ENCODE measurements at regions of chr11 and their contacts with region 1.

Region 1: DNA sequence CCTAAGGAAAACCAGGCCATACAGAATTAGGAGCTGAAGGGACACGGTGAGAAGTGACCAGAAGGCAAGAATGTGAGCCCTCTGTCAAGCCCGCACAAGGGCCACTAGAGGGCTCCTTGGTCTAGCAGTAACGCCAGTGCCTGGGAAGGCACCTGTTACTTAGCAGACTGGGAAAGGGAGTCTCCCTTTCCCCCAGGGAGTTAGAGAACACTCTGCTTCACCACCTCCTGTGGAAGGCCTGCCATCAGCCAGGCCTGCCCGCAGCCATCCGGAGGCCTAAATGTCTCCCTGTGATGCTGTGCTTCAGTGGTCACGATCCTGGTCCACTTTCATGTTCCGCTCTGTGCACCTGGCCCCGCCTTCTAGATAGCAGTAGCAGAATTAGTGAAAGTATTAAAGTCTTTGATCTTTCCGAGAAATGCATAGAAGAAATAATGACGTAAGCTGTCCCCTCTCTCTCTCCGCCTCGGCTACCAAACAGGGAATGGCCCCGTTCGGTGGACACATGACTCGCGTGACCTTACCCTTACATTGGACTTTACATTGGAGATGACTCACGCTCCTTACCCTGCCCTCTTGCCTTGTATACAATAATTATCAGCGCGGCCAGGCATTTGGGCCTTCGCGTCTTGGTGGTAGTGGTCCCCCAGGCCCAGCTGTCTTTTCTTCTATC is 10.7 kb upstream of the GSTP1 start:
- DNase-seq: peak; percentile 69
- ATAC-seq: no peak
- H3K4me3 ChIP-seq: no peak overlapping the region
- H3K4me3 Mint-ChIP-seq: no peak overlapping the region
- H3K27ac ChIP-seq: no peak overlapping the region
- H3K27ac Mint-ChIP-seq: no peak overlapping the region
- H3K4me1 ChIP-seq: no peaks in the 10 kb centered on the region
- H3K4me1 Mint-ChIP-seq: peaks cover 3% of the 10 kb centered on the region
- H3K27me3 ChIP-seq: peaks cover 0 to 33% (median 9%) of the 10 kb centered on the region in 4 experiments
- H3K27me3 Mint-ChIP-seq: peaks cover 28% of the 10 kb centered on the region
- CTCF ChIP-seq: peak; percentile 80

Region 2: GRCh38 chr11:67583247-67584204 is 10.6 kb after region 1 on chr11 and contains the start of gene GSTP1:
- CTCF ChIA-PET with region 1: interaction called, 19 read pairs
- POLR2A ChIA-PET with region 1: interaction called, 3 read pairs
- intact Hi-C with region 1: loop called (anchors 1 kb)
- DNase-seq: peak; percentile 86
- ATAC-seq: peak; percentile 71
- H3K4me3 ChIP-seq: peak within 1 kb of the TSS; percentile 34 to 69 (median 58)
- H3K4me3 Mint-ChIP-seq: peak within 1 kb of the TSS; percentile 93
- H3K27ac ChIP-seq: peak within 1 kb of the TSS; percentile 51 to 91
- H3K27ac Mint-ChIP-seq: peak within 1 kb of the TSS; percentile 100
- H3K4me1 ChIP-seq: peaks cover 67 to 73% of the 10 kb centered on the region in 2 donors
- H3K4me1 Mint-ChIP-seq: peaks cover 68% of the 10 kb centered on the region
- H3K27me3 ChIP-seq: peaks cover 0 to 4% (median 2%) of the 10 kb centered on the region in 4 experiments
- H3K27me3 Mint-ChIP-seq: peaks cover 5% of the 10 kb centered on the region
- CTCF ChIP-seq: peak; percentile 71
- total RNA-seq, gene GSTP1: 296 and 313 TPM in 2 replicates

Region 3: DNA sequence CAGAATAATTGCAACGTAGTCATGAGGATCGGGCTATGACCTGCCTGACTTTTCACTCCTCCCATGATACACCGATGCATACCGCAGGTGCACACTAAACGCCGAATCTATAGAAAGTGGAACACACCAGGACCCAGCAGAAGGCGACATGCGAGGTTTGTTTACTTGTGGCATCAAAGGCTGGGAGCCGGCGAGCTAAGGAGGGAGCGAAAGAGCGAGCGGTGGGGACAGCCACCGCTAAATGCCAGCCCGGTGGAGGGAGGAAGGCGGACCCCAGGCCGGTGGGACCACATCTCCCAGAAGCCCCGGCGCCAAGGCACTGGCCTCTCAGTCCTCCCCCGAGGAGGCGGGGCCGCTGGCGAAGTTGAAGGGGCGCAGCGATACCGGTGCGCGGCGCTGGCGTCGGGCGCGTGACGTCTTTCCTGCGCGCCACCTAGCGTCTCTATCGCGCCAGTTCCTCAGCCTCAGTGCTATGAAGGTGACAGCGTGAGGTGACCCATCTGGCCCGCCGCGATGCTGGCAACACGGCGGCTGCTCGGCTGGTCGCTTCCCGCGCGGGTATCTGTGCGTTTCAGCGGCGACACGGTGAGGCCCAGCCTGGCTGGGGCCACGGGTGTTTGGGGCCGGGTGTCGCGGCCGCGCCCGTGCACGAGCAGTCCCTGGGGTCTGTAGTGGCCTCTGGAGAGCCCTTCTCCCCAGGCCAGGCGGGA is 33.8 kb after region 1 on chr11 and contains the start of gene NDUFV1:
- CTCF ChIA-PET with region 1: interaction called, 11 read pairs
- POLR2A ChIA-PET with region 1: no interaction called
- intact Hi-C with region 1: loop called (anchors 1 kb)
- DNase-seq: peak; percentile 97
- ATAC-seq: peak; percentile 99
- H3K4me3 ChIP-seq: peak within 1 kb of the TSS; percentile 70 to 90 (median 88)
- H3K4me3 Mint-ChIP-seq: peak within 1 kb of the TSS; percentile 95
- H3K27ac ChIP-seq: peak within 1 kb of the TSS; percentile 43 to 72
- H3K27ac Mint-ChIP-seq: peak within 1 kb of the TSS; percentile 90
- H3K4me1 ChIP-seq: peaks cover 13 to 17% of the 10 kb centered on the region in 2 donors
- H3K4me1 Mint-ChIP-seq: peaks cover 20% of the 10 kb centered on the region
- H3K27me3 ChIP-seq: peaks cover 0 to 16% (median 5%) of the 10 kb centered on the region in 4 experiments
- H3K27me3 Mint-ChIP-seq: peaks cover 18% of the 10 kb centered on the region
- CTCF ChIP-seq: peak; percentile 82
- total RNA-seq, gene NDUFV1: 232 and 238 TPM in 2 replicates

Region 4: DNA sequence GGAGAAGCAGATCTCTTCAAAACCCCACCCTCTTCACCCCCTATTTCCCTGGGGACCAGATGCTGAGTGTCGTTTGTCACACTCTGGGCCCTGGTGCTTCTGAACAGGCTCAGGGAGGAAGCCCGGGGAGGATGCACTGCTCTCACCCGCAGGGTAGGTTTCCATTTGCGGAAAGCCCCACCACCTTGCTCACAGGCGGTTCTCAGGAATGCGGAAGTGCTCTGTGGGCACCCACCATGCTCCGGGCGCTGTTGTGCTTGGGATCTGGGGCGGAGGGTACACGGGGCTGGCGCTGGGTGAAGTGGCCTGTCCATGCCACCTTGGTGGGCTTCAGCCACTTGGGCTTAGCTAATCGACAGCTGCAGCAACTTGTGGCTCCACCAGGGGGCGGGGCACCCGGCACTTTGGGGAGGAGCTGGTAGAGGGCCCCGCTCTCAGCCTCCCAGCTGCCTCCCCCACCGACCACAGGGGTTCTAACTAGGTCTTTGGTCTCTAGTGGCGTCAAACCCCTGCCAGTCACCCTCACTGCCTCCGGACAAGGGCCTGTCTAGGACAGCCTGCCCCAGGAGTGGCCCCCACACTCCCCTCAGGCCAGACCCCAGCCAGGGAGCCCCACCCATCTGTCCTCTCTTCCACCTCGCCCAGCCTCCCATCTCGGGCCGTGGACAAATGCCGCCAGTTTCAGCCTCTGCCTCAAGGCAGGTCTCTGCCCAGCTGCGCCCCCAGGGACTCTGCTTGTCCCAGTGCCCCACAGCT is 41.3 kb after region 1 on chr11:
- CTCF ChIA-PET with region 1: interaction called, 17 read pairs
- POLR2A ChIA-PET with region 1: interaction called, 3 read pairs
- intact Hi-C with region 1: no loop called
- DNase-seq: peak; percentile 97
- ATAC-seq: peak; percentile 95
- H3K4me3 ChIP-seq: peak overlapping the region in 4 of 5 experiments; percentile 38 to 58 (median 50)
- H3K4me3 Mint-ChIP-seq: peak overlapping the region; percentile 83
- H3K27ac ChIP-seq: peak overlapping the region; percentile 97 to 98
- H3K27ac Mint-ChIP-seq: peak overlapping the region; percentile 99
- H3K4me1 ChIP-seq: peaks cover 32 to 38% of the 10 kb centered on the region in 2 donors
- H3K4me1 Mint-ChIP-seq: peaks cover 45% of the 10 kb centered on the region
- H3K27me3 ChIP-seq: no peaks in the 10 kb centered on the region
- H3K27me3 Mint-ChIP-seq: no peaks in the 10 kb centered on the region
- CTCF ChIP-seq: peak; percentile 40

Region 5: GRCh38 chr11:67648140-67649123 is 75.5 kb after region 1 on chr11:
- CTCF ChIA-PET with region 1: interaction called, 12 read pairs
- POLR2A ChIA-PET with region 1: interaction called, 3 read pairs
- intact Hi-C with region 1: no loop called
- DNase-seq: peak; percentile 85
- ATAC-seq: peak; percentile 79
- H3K4me3 ChIP-seq: peak overlapping the region in 2 of 5 experiments; percentile 4 to 11
- H3K4me3 Mint-ChIP-seq: peak overlapping the region; percentile 95
- H3K27ac ChIP-seq: peak overlapping the region; percentile 56 to 66
- H3K27ac Mint-ChIP-seq: peak overlapping the region; percentile 78
- H3K4me1 ChIP-seq: peaks cover 66 to 72% of the 10 kb centered on the region in 2 donors
- H3K4me1 Mint-ChIP-seq: peaks cover 66% of the 10 kb centered on the region
- H3K27me3 ChIP-seq: peaks cover 0 to 5% (median 0%) of the 10 kb centered on the region in 4 experiments
- H3K27me3 Mint-ChIP-seq: no peaks in the 10 kb centered on the region
- CTCF ChIP-seq: peak; percentile 72

Region 6: GRCh38 chr11:67656278-67656922 is 83.5 kb after region 1 on chr11:
- CTCF ChIA-PET with region 1: interaction called, 12 read pairs
- POLR2A ChIA-PET with region 1: no interaction called
- intact Hi-C with region 1: loop called (anchors 1 kb)
- DNase-seq: peak; percentile 37
- ATAC-seq: no peak
- H3K4me3 ChIP-seq: no peak overlapping the region
- H3K4me3 Mint-ChIP-seq: no peak overlapping the region
- H3K27ac ChIP-seq: no peak overlapping the region
- H3K27ac Mint-ChIP-seq: no peak overlapping the region
- H3K4me1 ChIP-seq: peaks cover 8 to 11% of the 10 kb centered on the region in 2 donors
- H3K4me1 Mint-ChIP-seq: peaks cover 11% of the 10 kb centered on the region
- H3K27me3 ChIP-seq: no peaks in the 10 kb centered on the region
- H3K27me3 Mint-ChIP-seq: no peaks in the 10 kb centered on the region
- CTCF ChIP-seq: no peak

Region 7: DNA sequence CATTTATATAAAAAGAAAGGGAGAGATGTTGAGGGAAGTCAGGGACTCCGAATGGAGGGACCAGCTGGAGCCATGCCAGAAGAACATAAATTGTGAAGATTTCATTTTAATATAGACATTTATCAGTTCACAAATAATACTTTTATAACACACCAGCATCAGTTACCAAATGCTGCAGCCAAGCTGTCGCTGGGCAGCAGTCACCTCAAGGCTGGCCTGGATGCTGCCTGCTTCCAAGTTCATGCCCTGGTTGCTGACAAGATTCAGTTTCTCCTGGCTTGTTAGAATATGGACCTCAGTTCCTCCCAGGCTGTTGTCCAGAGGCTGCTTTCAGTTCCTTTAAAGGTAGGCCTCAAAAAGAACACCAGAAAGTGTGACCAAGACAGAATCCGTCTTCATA is 132.4 kb after region 1 on chr11:
- CTCF ChIA-PET with region 1: no interaction called
- POLR2A ChIA-PET with region 1: no interaction called
- intact Hi-C with region 1: loop called (anchors 5 kb)
- DNase-seq: no peak
- ATAC-seq: no peak
- H3K4me3 ChIP-seq: no peak overlapping the region
- H3K4me3 Mint-ChIP-seq: no peak overlapping the region
- H3K27ac ChIP-seq: no peak overlapping the region
- H3K27ac Mint-ChIP-seq: no peak overlapping the region
- H3K4me1 ChIP-seq: no peaks in the 10 kb centered on the region
- H3K4me1 Mint-ChIP-seq: no peaks in the 10 kb centered on the region
- H3K27me3 ChIP-seq: peaks cover 0 to 6% (median 0%) of the 10 kb centered on the region in 4 experiments
- H3K27me3 Mint-ChIP-seq: peaks cover 22% of the 10 kb centered on the region
- CTCF ChIP-seq: no peak